ENCODE measurements at regions of chr1 and their contacts with region 1.

Region 1: DNA sequence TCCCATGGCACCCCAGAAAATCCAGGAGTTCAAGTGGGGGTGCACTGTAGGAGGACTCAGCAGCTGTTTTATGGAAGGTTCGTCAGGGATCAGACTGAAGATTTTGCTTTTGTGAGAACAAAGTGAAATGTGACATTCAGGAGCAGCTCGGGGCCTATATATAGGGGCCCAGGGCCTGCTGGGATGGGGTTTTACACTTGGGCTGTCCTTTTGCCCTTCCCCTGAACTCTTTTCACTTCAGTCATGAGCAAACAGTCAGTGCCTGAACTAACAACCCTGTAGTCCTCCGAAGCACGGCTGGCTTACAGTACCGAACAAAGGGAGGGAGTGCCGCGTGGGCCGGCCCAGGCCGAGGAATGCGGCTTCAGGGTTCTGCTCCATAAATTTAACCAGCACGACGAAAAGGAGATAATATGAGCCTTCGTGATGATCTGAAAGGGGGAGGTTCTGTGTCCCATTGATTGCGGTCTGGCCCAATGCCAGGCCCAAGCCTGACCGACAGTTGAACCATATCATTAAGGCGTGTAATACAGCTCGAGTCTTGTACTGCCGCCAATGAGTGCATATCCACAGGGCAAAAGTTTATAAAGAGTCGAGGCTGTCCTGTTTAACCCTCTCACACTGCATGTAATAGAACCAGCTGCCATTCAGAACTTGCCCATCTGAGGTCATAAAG is 139.9 kb downstream of the DHRS3 start:
- DNase-seq: peak; percentile 47
- ATAC-seq: peak; percentile 33
- H3K4me3 Mint-ChIP-seq: peak overlapping the region; percentile 61
- H3K27ac Mint-ChIP-seq: peak overlapping the region; percentile 87
- H3K4me1 Mint-ChIP-seq: peaks cover 92% of the 10 kb centered on the region
- H3K27me3 Mint-ChIP-seq: no peaks in the 10 kb centered on the region

Region 2: DNA sequence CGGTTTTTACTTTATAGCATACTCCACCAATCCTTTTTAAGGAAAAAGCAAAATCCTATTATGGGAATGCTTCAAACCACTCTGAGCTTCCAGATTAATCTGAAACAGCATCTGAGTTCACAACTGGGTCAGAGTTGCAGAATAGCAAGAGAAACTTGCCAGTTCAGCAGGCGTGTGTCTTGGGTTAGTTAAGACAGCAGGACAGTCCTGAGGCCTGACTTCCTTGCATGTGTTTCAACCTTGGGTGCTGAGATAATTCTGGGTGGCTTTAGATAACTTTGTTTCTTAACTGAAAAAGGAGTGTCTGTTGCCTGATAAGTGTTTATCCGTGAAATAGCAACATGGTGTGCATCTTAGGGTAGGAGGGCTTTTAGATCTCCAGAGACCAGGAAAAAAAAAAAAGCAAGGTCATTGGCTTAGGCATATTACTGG is 29.3 kb before region 1 on chr1:
- CTCF ChIA-PET with region 1: interaction called, 8 read pairs
- POLR2A ChIA-PET with region 1: interaction called, 19 read pairs
- DNase-seq: no peak
- ATAC-seq: no peak
- H3K4me3 Mint-ChIP-seq: peak overlapping the region; percentile 73
- H3K27ac Mint-ChIP-seq: peak overlapping the region; percentile 98
- H3K4me1 Mint-ChIP-seq: peaks cover 90% of the 10 kb centered on the region
- H3K27me3 Mint-ChIP-seq: no peaks in the 10 kb centered on the region

Measured in activated CD8-positive, alpha-beta T cell treated with anti-CD3 and anti-CD28 coated beads, Interleukin-2, amount 10 ng/mL, durations not matched to agents 7 days and 5 days (primary cell).